CD4-positive, alpha-beta T cell (primary cell): ENCODE measurements at regions of chr1 and their contacts with region 1.

Region 1: DNA sequence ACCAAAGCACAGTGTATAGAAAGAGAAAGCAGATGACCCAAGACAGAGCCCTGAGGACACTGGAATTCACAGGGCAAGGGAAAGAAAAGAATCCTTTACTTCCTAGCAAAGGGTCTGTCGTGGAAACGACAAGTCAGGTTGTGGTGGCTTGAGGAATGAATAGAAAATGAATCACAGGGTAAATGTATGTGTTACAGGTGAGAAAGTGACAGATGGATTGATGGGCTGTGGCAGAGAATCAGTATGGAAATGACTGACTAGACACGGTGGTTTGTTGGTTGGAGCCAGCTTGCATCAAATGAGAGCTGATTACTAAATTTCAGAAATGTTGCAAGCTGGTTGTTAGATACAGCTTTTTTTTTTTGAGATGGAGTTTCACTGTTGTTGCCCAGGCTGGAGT is 46.9 kb downstream of the PTP4A2 start:
- DNase-seq: no peak
- ATAC-seq: no peak
- H3K4me3 ChIP-seq: no peak overlapping the region
- H3K4me3 Mint-ChIP-seq: no peak overlapping the region
- H3K27ac ChIP-seq: no peak overlapping the region
- H3K27ac Mint-ChIP-seq: peak overlapping the region; percentile 100
- H3K4me1 ChIP-seq: peaks cover 20% of the 10 kb centered on the region
- H3K4me1 Mint-ChIP-seq: peaks cover 13% of the 10 kb centered on the region
- H3K27me3 ChIP-seq: no peaks in the 10 kb centered on the region
- H3K27me3 Mint-ChIP-seq: no peaks in the 10 kb centered on the region
- CTCF ChIP-seq: no peak

Region 2: DNA sequence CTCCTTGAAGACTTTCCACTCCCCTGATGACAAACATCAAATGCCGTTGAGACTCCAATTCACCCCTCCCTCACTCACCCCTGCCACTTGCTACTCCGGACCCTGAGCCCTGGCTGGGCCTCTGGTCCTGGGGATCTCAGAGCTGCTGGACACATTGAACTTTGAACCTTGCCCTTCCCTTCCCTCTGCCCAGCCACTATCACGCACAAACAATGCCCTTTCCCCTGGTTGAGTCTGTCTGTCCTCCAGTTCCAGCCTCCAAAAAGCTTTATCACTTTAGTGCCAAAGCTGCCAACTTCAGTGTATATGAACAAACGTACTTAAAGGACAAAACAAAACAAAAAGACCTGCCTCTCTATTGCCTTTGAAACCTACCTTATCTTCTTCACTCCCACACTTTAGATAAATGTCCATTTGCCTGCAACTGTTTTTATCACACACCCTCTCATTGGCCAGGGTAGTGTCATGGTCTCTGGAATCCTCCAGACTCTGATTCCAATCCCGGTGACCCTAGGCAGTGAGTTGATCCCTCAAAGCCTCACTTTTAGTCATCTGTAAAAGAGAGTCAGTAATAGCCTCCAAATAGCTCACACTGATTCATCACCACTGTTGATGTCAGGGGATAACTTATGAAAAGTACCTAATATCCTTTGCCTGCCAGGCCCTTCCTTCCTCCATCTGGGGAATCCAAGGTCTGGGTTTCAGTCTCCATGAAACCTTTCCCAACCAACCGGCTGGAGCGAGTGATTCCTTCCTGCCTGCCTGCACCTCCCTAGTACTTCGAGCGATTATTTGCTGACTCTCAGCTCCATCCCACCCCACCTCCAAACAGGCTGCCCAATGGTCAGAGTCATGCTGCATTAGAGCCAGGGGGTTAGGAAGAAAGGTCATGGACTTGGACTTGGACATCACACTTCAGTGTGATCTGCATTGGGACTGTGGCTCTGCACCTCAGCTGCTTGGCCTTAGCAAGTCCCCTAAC is 59.6 kb before region 1 on chr1:
- CTCF ChIA-PET with region 1: no interaction called
- POLR2A ChIA-PET with region 1: interaction called, 12 read pairs
- intact Hi-C with region 1: loop called in 1 of 2 experiments (anchors 2 kb)
- DNase-seq: no peak
- ATAC-seq: no peak
- H3K4me3 ChIP-seq: no peak overlapping the region
- H3K4me3 Mint-ChIP-seq: no peak overlapping the region
- H3K27ac ChIP-seq: no peak overlapping the region
- H3K27ac Mint-ChIP-seq: no peak overlapping the region
- H3K4me1 ChIP-seq: peaks cover 35% of the 10 kb centered on the region
- H3K4me1 Mint-ChIP-seq: peaks cover 44% of the 10 kb centered on the region
- H3K27me3 ChIP-seq: no peaks in the 10 kb centered on the region
- H3K27me3 Mint-ChIP-seq: no peaks in the 10 kb centered on the region
- CTCF ChIP-seq: no peak

Region 3: DNA sequence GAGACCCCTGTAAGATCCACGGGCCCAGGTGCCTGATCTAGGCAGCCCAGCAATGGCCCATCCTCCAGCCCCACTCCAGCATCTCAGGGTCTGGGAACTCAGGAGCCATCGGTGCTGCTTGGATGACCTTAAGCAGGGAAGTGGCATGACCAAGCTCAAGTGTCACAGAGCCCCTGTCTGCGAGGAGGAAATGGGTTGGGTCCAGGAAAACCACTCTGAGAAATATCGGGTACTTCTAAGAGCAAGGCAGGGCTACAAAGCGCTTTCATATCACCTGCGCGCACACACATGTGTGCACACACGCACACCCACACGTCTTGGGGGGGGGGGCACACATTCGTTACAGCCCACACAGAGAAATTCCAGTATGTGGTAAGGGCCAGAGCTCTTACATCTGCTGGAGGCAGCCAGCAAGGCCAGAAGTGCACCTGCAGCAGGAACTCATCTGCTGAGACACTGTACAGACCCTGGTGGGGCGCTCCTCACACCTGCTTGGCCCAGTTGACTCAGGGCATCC is 42.8 kb before region 1 on chr1:
- CTCF ChIA-PET with region 1: no interaction called
- POLR2A ChIA-PET with region 1: interaction called, 6 read pairs
- intact Hi-C with region 1: loop called in 1 of 2 experiments (anchors 5 kb)
- DNase-seq: peak; percentile 24 to 77 (median 45)
- ATAC-seq: peak; percentile 80
- H3K4me3 ChIP-seq: peak overlapping the region; percentile 12
- H3K4me3 Mint-ChIP-seq: peak overlapping the region; percentile 54
- H3K27ac ChIP-seq: peak overlapping the region; percentile 33 to 55
- H3K27ac Mint-ChIP-seq: peak overlapping the region; percentile 78
- H3K4me1 ChIP-seq: peaks cover 38% of the 10 kb centered on the region
- H3K4me1 Mint-ChIP-seq: peaks cover 68% of the 10 kb centered on the region
- H3K27me3 ChIP-seq: no peaks in the 10 kb centered on the region
- H3K27me3 Mint-ChIP-seq: no peaks in the 10 kb centered on the region
- CTCF ChIP-seq: no peak

Region 4: DNA sequence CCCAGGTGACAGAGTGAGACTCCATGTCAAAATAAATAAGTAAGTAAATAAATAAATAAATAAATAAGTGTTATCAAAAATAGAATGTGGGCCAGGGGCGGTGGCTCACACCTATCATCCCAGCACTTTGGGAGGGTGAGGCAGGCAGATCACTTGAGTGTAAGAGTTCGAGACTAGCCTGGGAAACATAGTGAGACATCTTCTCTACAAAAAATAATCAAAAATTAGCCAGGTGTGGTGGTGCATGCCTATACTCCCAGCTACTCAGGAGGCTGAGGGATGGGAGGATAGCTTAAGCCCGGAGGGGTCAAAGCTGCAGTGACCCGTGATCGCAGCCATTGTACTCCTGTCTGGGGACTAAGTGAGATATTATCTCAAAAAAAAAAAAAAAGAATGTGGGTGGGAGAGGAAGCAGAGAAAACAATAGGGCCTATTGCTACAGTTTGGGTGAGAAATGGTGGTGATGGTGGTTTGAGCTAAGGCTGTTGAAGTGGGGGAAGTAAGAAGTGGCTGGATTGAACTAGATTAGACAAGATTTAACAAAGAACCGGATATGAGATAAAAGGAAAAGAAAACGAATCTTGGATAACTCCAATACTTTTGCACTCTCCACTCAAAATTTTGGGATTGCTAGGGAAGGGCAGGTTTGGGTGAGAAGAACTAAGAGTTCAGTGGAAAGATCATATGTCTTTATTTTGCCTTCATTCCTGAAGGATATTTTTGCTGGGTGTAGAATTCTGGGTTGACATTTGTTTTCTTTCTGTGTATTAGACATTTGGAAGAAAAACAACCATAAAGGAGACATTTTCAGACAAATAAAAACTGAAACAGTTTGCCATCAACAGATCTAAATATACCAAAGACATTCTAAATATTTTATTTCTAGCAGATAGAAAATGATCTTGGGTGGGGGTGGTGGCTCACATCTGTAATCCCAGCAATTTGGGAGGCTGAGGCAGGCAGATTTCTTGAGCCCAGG is 18.3 kb before region 1 on chr1:
- CTCF ChIA-PET with region 1: interaction called, 4 read pairs
- POLR2A ChIA-PET with region 1: interaction called, 13 read pairs
- intact Hi-C with region 1: no loop called
- DNase-seq: peak in 3 of 14 experiments; percentile 24 to 81 (median 37)
- ATAC-seq: peak; percentile 39
- H3K4me3 ChIP-seq: no peak overlapping the region
- H3K4me3 Mint-ChIP-seq: no peak overlapping the region
- H3K27ac ChIP-seq: no peak overlapping the region
- H3K27ac Mint-ChIP-seq: peak overlapping the region; percentile 48
- H3K4me1 ChIP-seq: peaks cover 15% of the 10 kb centered on the region
- H3K4me1 Mint-ChIP-seq: peaks cover 23% of the 10 kb centered on the region
- H3K27me3 ChIP-seq: no peaks in the 10 kb centered on the region
- H3K27me3 Mint-ChIP-seq: no peaks in the 10 kb centered on the region
- CTCF ChIP-seq: no peak

Region 5: GRCh38 chr1:31923901-31924535 is 32.7 kb after region 1 on chr1:
- CTCF ChIA-PET with region 1: no interaction called
- POLR2A ChIA-PET with region 1: interaction called, 5 read pairs
- intact Hi-C with region 1: loop called in 1 of 2 experiments (anchors 5 kb)
- DNase-seq: peak in 2 of 14 experiments; percentile 38 to 56
- ATAC-seq: peak; percentile 56
- H3K4me3 ChIP-seq: no peak overlapping the region
- H3K4me3 Mint-ChIP-seq: peak overlapping the region; percentile 76
- H3K27ac ChIP-seq: no peak overlapping the region
- H3K27ac Mint-ChIP-seq: peak overlapping the region; percentile 90
- H3K4me1 ChIP-seq: peaks cover 59% of the 10 kb centered on the region
- H3K4me1 Mint-ChIP-seq: peaks cover 81% of the 10 kb centered on the region
- H3K27me3 ChIP-seq: no peaks in the 10 kb centered on the region
- H3K27me3 Mint-ChIP-seq: no peaks in the 10 kb centered on the region
- CTCF ChIP-seq: no peak

Region 6: GRCh38 chr1:31944205-31945089 is 53.2 kb after region 1 on chr1:
- CTCF ChIA-PET with region 1: no interaction called
- POLR2A ChIA-PET with region 1: interaction called, 14 read pairs
- intact Hi-C with region 1: no loop called
- DNase-seq: peak; percentile 60 to 96 (median 85)
- ATAC-seq: peak; percentile 64
- H3K4me3 ChIP-seq: peak overlapping the region; percentile 58
- H3K4me3 Mint-ChIP-seq: peak overlapping the region; percentile 89
- H3K27ac ChIP-seq: peak overlapping the region; percentile 53 to 83
- H3K27ac Mint-ChIP-seq: peak overlapping the region; percentile 95
- H3K4me1 ChIP-seq: peaks cover 67% of the 10 kb centered on the region
- H3K4me1 Mint-ChIP-seq: peaks cover 54% of the 10 kb centered on the region
- H3K27me3 ChIP-seq: no peaks in the 10 kb centered on the region
- H3K27me3 Mint-ChIP-seq: no peaks in the 10 kb centered on the region
- CTCF ChIP-seq: no peak